Heart left ventricle (tissue), 16 donors: ENCODE measurements at regions of chr1 and their contacts with region 1.

Region 1: DNA sequence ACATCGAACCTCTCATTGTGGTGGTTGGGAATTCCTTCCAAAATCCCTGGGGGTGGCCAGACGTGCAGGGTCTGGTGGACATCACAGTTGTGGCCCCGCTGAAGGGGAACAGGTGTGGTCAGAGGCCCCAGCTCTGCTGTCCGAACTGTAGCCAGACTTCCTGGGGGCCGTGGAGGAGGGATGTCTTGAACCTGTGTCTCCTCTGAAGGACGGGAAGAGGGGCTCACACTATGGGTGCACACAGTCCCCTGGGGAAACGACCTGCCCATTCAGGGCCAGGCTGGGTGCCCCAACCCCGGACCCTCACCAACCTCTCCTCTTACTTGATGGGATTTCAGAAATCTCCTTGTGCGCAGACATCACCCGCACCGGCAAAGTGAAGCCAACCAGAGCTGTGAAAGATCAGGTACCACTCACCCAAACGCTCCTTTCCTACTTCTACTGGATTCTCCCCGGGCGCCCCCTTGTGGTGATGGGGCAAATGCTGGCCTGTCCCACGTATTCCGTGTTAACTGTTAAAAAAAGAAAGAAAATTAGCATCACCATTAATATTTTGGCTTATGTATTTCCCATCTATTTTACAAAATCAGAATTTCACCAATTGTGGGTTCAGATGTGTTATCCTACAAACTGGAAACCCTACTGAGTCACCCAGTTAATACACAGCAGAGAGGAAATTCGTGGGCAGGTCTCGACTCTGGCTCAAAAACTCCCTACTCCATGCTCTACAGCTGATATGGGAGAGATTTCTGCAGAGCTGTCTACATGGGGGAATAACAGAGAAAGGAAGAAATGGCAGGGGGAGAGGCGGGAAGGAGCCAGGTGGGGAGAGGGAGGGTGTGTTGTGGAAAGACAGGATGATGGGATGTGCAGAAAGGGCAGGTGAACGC is 28.1 kb downstream of the PADI4 start:
- DNase-seq: peak; percentile 37 to 80 (median 55)
- ATAC-seq: peak in 2 of 4 donors; percentile 52 to 55
- H3K4me3 ChIP-seq: no peak overlapping the region
- H3K27ac ChIP-seq: no peak overlapping the region
- H3K4me1 ChIP-seq: no peaks in the 10 kb centered on the region
- H3K27me3 ChIP-seq: peaks cover 0 to 43% (median 0%) of the 10 kb centered on the region in 9 donors
- CTCF ChIP-seq: peak; percentile 49 to 80 (median 67)
- POLR2A ChIP-seq: no peak

Region 2: DNA sequence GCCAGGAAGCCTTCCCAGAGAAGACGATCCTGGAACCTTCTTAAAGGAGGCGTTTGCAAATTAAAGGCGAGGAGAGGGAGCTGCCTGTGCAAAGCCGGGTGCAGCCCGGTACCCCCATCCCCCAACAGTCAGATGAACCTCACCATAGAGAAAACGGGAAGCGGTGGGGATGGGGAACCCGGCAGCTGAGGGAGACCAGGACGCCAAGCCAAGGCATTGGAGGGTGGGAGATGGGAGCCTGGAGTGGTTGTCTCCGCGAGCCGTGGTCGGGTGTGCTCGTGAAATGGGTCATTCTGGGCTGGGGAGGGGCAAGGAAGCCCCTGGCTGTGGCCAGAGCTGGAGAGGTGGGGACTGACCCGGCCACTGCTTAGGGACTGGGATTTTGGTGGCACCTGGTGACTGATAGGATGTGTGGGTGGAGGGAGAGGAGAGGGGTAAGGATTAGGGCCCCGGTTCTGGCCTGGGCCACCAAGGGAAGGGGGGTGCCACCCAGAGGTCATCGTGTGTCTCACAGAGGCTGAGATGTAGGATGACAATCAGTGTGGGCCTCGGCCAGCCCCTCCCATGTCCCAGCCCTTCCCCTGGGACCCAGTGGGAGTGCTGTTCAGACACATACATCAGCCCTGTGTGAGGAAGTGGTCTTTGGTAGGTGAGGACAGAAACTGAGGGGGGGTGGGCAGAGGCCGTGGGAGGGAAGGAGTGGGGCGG is 216.1 kb before region 1 on chr1:
- intact Hi-C with region 1: loop called in 7 of 10 experiments (anchors 5 to 10 kb)
- DNase-seq: no peak
- ATAC-seq: peak in 1 of 4 donors; percentile 25
- H3K4me3 ChIP-seq: peak overlapping the region in 9 of 12 donors; percentile 27 to 54 (median 46)
- H3K27ac ChIP-seq: peak overlapping the region in 1 of 12 donors; percentile 64
- H3K4me1 ChIP-seq: peaks cover 0 to 31% (median 10%) of the 10 kb centered on the region in 12 donors
- H3K27me3 ChIP-seq: peaks cover 3 to 50% (median 38%) of the 10 kb centered on the region in 9 donors
- CTCF ChIP-seq: no peak
- POLR2A ChIP-seq: no peak